ENCODE measurements at regions of chr1 and their contacts with region 1.

Region 1: DNA sequence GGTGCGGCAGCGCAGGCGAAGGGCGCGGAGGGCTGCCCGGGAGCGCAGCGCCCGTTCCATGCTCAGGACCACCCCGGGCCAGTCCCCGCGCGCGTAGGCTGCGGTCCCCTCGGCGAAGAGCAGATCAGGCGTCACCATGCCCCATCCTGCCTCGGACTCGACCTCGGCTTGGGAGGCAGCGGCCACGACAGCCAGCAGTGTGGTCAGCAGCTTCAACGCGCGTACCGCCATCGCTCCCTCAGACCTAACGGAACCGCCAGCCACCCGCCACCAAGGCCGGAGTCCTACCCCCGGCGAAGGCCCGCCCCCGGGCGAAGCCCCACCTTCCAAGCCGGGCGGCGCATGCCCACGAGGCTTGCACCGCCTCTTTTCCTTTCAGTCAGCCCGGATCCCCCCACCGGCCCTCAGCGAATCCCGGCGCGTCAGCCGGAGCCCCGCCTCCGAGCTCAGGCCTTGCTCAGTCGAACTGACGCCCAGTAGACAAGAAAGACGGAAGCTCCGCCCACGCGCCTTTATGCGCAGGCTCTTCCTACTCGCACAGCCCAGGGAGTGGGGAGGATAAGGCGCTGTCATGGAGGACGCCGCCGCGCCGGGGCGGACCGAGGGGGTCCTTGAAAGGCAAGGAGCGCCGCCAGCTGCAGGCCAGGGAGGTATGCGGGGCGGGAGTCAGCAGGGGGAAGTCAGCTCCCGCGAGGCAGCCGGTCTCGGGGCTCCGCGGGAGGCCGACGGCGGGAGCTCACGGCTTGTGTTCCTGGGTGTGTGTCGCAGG is at the starts of genes C1orf50 and P3H1:
- DNase-seq: peak; percentile 99 to 100 (median 100)
- H3K4me3 ChIP-seq: peak within 1 kb of the TSS; percentile 81
- H3K27ac ChIP-seq: peak within 1 kb of the TSS; percentile 72 to 80
- H3K4me1 ChIP-seq: peaks cover 11% of the 10 kb centered on the region
- H3K27me3 ChIP-seq: no peaks in the 10 kb centered on the region
- CTCF ChIP-seq: no peak
- EP300 ChIP-seq: peak; percentile 13
- POLR2A ChIP-seq: peak; percentile 88
- total RNA-seq, gene C1orf50: 1.3 to 10.1 (median 5.8) TPM
- total RNA-seq, gene P3H1: 22.5 to 47.0 (median 39.4) TPM

Region 2: DNA sequence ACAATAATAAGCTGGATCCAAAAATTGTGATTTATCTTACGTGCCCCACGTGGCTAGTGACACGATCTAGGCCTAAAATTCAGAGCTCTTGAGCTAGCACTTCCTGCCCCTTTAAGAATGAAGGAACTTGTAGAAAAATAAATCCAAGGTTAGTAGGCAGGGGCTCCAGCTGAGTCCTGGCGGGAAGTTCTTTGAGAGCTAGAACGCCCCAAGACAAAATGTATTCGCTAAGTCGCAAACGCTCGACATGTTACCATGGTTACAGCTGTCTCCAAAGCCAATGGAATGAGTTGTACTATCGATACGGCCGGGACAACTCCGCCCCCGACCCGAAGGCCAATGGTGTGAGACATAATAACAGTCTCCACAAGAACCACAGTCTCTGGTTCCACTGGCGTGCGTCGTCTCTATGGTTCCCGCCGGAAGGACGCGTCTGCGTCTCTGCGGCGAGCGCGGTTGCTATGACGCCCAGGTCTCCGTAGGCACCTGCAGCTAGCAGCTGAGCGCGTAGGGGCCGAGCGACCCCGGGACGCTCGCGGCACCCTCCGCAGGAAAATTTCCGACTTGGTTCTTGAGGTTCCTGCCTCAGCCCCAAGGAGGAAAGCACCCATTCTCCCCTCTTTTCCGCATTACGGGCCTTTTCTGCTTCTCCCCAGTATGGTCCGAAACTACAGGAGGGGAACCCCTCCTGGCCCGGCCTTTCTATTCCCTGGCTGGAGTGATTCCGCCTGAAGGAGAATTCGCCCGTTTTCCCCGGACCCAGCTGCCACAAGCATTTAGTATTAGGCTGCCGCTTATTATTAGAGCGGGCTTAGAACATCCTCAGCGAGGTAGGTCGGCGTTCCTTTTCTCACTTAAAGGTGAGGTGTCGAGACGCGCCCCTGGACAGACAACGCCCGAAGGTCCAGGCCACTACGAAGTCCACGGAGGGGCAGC is 303.8 kb before region 1 on chr1 and contains the start of gene CCDC30:
- intact Hi-C with region 1: no loop called
- DNase-seq: peak; percentile 92 to 96 (median 95)
- H3K4me3 ChIP-seq: peak within 1 kb of the TSS; percentile 56
- H3K27ac ChIP-seq: no peak within 1 kb of the TSS
- H3K4me1 ChIP-seq: peaks cover 5% of the 10 kb centered on the region
- H3K27me3 ChIP-seq: no peaks in the 10 kb centered on the region
- CTCF ChIP-seq: no peak
- EP300 ChIP-seq: no peak
- POLR2A ChIP-seq: no peak
- total RNA-seq, gene CCDC30: 5.2 to 11.7 (median 7.2) TPM

Region 3: GRCh38 chr1:42601472-42601871 is 165.5 kb before region 1 on chr1:
- intact Hi-C with region 1: no loop called
- DNase-seq: no peak
- H3K4me3 ChIP-seq: no peak overlapping the region
- H3K27ac ChIP-seq: no peak overlapping the region
- H3K4me1 ChIP-seq: no peaks in the 10 kb centered on the region
- H3K27me3 ChIP-seq: no peaks in the 10 kb centered on the region
- CTCF ChIP-seq: no peak
- EP300 ChIP-seq: no peak
- POLR2A ChIP-seq: no peak

Region 4: DNA sequence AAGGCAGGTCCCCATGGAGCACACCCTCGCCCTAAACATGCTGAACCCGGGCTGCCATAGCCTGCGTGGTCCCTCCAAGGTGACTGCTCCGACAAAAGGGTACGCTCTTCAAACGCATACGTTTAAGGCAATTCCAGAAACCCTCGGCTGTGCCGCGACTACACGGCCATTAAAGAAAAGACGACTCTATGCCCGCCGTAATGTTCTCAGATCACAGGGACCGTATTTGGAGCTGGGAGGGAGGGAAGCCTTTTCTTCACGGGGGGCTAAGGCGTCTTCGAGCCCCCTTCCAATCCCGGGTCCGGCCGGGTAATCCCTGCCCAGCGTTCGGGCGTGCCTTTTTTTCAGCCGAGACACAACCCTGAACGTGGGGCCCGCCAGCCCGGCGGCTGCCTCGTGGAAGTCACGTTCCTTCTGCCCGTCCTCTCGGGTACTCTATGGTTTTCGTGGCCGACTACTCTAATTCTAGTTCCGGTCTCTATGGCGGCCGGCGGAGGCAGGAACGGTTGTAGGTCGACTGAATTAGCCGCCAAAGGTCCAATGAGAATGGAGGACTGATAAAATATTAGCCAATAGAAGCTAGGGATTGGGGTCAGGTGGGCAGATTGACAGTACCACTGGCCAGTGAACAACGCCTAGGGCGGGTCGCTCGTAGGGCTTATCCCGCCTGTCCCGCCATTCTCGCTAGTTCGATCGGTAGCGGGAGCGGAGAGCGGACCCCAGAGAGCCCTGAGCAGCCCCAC is 85.0 kb before region 1 on chr1 and contains the start of gene YBX1:
- intact Hi-C with region 1: loop called in 2 of 4 experiments (anchors 10 kb)
- DNase-seq: peak; percentile 96 to 98 (median 98)
- H3K4me3 ChIP-seq: peak within 1 kb of the TSS; percentile 84
- H3K27ac ChIP-seq: peak within 1 kb of the TSS; percentile 93 to 97
- H3K4me1 ChIP-seq: peaks cover 11% of the 10 kb centered on the region
- H3K27me3 ChIP-seq: no peaks in the 10 kb centered on the region
- CTCF ChIP-seq: peak in 2 of 3 donors; percentile 6 to 20
- EP300 ChIP-seq: no peak
- POLR2A ChIP-seq: peak; percentile 72
- total RNA-seq, gene YBX1: 196 to 482 (median 373) TPM

Region 5: DNA sequence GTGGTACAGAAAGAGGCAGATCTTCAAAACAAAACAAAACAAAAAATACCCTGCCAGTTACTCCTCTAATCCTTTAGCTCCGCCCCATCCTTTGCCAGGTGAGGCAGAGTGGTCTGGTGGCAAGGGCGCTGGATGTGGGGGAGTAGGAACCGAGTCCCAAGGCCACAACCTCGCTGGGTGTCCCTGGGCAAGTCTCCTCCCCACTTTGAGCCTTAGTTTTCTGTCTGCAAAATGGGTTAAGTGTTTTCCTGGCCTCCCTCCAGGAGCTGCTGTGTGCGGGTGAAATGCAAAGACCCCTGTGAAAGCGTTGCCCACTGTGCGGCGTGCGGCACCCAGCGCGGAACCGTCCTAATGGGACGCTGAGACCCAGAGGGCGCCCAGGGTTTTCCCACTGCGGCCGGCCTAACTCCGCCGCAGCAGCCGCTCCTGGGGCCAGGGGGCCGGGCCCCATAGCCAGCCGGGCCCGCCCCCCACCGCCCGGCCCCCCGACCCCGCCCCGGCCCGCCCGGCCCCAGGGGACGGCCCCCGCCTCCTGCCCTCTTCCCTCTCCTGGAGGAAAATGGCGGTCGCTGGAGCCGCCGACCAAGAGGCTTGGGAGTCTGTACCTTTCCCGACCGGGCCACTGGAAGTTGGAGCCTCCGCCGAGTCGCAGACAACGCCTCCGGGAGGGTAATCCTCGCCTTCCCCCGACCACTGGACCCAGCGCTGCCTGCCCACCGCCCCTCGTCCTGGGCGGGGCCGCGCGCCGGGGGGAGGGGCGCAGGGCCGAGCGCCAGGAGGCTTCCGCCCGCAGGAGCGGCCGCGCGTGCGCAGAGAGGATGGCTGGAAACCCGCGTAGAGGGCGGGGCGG is 49.9 kb after region 1 on chr1 and contains the starts of genes ERMAP and SVBP:
- intact Hi-C with region 1: loop called in 1 of 4 experiments (anchors 10 kb)
- DNase-seq: peak; percentile 92 to 96 (median 95)
- H3K4me3 ChIP-seq: peak within 1 kb of the TSS; percentile 90
- H3K27ac ChIP-seq: peak within 1 kb of the TSS; percentile 71 to 99
- H3K4me1 ChIP-seq: peaks cover 7% of the 10 kb centered on the region
- H3K27me3 ChIP-seq: no peaks in the 10 kb centered on the region
- CTCF ChIP-seq: no peak
- EP300 ChIP-seq: no peak
- POLR2A ChIP-seq: peak; percentile 40
- total RNA-seq, gene ERMAP: 3.2 to 10.6 (median 7.7) TPM
- total RNA-seq, gene SVBP: 20.8 to 56.6 (median 30.3) TPM

Region 6: DNA sequence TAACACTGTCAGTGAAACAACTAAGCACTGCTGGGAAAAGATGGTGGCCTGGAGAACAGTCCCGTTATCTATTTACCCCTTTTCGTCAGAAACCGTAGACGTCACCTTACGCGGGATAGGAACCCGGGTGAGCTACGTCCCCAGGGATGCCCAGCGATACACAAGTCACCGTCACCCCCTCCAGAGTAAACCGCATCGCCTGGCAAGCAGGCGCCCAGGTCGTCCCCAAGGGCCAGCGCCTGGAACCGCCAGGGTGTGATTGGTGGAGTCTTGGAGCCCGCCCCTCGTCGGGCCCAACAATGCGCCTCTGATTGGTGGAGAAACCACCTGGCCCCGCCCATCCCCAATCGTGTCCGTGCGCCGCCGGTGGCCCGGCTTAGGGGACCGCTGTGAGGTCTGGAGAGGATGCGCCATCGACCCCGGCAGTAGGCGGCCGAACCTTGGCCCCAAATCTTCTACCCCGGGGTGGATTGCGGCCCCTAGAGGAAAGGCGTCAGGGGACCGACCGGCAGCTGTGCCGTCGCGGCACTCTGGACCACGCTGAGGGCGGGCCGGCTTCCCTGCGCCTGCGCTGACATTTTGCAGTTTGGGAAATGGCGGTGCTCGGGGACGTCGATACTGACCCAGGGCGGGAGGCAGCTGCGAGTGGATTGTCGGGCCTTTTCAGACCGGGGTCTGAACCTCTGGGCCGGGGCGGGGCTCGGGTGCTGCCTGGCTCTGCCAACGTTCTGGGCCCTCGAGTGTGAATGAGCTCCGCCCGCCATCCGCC is 157.3 kb after region 1 on chr1:
- intact Hi-C with region 1: loop called in 1 of 4 experiments (anchors 10 kb)
- DNase-seq: peak; percentile 93 to 95 (median 94)
- H3K4me3 ChIP-seq: peak overlapping the region; percentile 63
- H3K27ac ChIP-seq: peak overlapping the region; percentile 77 to 80
- H3K4me1 ChIP-seq: peaks cover 2% of the 10 kb centered on the region
- H3K27me3 ChIP-seq: no peaks in the 10 kb centered on the region
- CTCF ChIP-seq: peak in 1 of 3 donors; percentile 14
- EP300 ChIP-seq: no peak
- POLR2A ChIP-seq: peak; percentile 79

Measured in ovary (tissue), 10 donors.